PC-3 (cell line): ENCODE measurements at regions of chr5 and their contacts with region 1.

Region 1: GRCh38 chr5:90503596-90503995 is 25.8 kb downstream of the LYSMD3 start:
- DNase-seq: peak; percentile 65
- ATAC-seq: peak; percentile 81
- H3K4me3 ChIP-seq: peak overlapping the region; percentile 34
- H3K27ac ChIP-seq: peak overlapping the region; percentile 67
- H3K4me1 ChIP-seq: peaks cover 35% of the 10 kb centered on the region
- H3K27me3 ChIP-seq: no peaks in the 10 kb centered on the region
- CTCF ChIP-seq: no peak

Region 2: GRCh38 chr5:90421136-90421535 is 82.5 kb before region 1 on chr5:
- CTCF ChIA-PET with region 1: no interaction called
- POLR2A ChIA-PET with region 1: no interaction called
- intact Hi-C with region 1: no loop called
- DNase-seq: peak; percentile 32
- ATAC-seq: peak; percentile 76
- H3K4me3 ChIP-seq: no peak overlapping the region
- H3K27ac ChIP-seq: no peak overlapping the region
- H3K4me1 ChIP-seq: no peaks in the 10 kb centered on the region
- H3K27me3 ChIP-seq: no peaks in the 10 kb centered on the region
- CTCF ChIP-seq: peak; percentile 50

Region 3: GRCh38 chr5:90479611-90480385 is 23.8 kb before region 1 on chr5:
- CTCF ChIA-PET with region 1: no interaction called
- POLR2A ChIA-PET with region 1: interaction called, 3 read pairs
- intact Hi-C with region 1: loop called (anchors 2 kb)
- DNase-seq: peak; percentile 68
- ATAC-seq: peak; percentile 71
- H3K4me3 ChIP-seq: no peak overlapping the region
- H3K27ac ChIP-seq: peak overlapping the region; percentile 23
- H3K4me1 ChIP-seq: peaks cover 31% of the 10 kb centered on the region
- H3K27me3 ChIP-seq: no peaks in the 10 kb centered on the region
- CTCF ChIP-seq: no peak

Region 4: GRCh38 chr5:90575712-90576111 is 72.1 kb after region 1 on chr5:
- CTCF ChIA-PET with region 1: no interaction called
- POLR2A ChIA-PET with region 1: no interaction called
- intact Hi-C with region 1: no loop called
- DNase-seq: no peak
- ATAC-seq: no peak
- H3K4me3 ChIP-seq: no peak overlapping the region
- H3K27ac ChIP-seq: peak overlapping the region; percentile 40
- H3K4me1 ChIP-seq: peaks cover 25% of the 10 kb centered on the region
- H3K27me3 ChIP-seq: no peaks in the 10 kb centered on the region
- CTCF ChIP-seq: no peak

Region 5: DNA sequence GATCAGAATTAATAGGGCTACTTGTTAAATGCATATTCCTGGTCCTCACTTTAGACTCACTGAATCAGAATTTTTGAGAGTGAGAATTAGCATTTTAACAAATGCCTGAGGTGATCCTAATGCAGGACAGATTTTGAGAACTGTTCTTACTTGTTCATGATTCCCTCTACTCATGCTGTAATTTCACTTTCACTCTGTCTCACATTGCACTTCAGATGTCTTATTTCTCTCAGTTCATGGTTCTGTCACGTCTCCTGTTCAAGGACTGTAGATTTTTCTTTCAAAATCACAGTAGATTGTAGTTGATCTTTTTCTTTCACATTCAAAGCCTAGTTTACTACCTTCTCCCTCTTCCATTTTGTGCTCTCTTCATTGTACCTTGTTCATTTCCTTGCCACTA is 109.3 kb after region 1 on chr5:
- CTCF ChIA-PET with region 1: no interaction called
- POLR2A ChIA-PET with region 1: no interaction called
- intact Hi-C with region 1: no loop called
- DNase-seq: no peak
- ATAC-seq: no peak
- H3K4me3 ChIP-seq: no peak overlapping the region
- H3K27ac ChIP-seq: no peak overlapping the region
- H3K4me1 ChIP-seq: no peaks in the 10 kb centered on the region
- H3K27me3 ChIP-seq: no peaks in the 10 kb centered on the region
- CTCF ChIP-seq: no peak